WTC11 (cell line): ENCODE measurements at regions of chr5 and their contacts with region 1.

Region 1: GRCh38 chr5:178838695-178839685 is 20.8 kb upstream of the ZNF354B start:
- DNase-seq: peak; percentile 90
- ATAC-seq: peak; percentile 95
- H3K4me3 Mint-ChIP-seq: peak overlapping the region; percentile 66
- H3K27ac Mint-ChIP-seq: no peak overlapping the region
- H3K4me1 Mint-ChIP-seq: peaks cover 6% of the 10 kb centered on the region
- H3K27me3 Mint-ChIP-seq: no peaks in the 10 kb centered on the region; the same call in 1 of the 2 replicates
- CTCF ChIP-seq: peak; percentile 85

Region 2: DNA sequence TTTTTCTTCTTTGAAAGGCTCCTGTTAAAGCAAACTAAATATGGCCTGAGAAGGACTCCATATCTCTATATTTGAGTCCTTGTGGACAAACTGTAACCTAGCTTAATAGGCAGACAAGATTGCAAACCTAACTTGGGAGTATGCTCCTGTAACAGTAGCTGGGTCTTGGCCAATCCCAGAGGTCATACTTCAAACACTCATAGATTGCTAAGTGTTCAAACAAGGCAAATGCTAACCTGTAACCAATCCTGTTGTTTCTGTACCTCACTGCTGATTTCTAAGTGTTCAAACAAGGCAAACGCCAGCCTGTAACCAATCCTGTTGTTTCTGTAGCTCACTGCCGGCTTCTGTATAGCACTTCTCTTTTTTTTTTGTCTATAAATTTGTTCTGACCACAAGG is 161.6 kb before region 1 on chr5:
- CTCF ChIA-PET with region 1: no interaction called
- POLR2A ChIA-PET with region 1: no interaction called
- DNase-seq: no peak
- ATAC-seq: no peak
- H3K4me3 Mint-ChIP-seq: no peak overlapping the region
- H3K27ac Mint-ChIP-seq: no peak overlapping the region
- H3K4me1 Mint-ChIP-seq: no peaks in the 10 kb centered on the region
- H3K27me3 Mint-ChIP-seq: peaks cover 3% of the 10 kb centered on the region; the same call in 1 of the 2 replicates
- CTCF ChIP-seq: no peak

Region 3: DNA sequence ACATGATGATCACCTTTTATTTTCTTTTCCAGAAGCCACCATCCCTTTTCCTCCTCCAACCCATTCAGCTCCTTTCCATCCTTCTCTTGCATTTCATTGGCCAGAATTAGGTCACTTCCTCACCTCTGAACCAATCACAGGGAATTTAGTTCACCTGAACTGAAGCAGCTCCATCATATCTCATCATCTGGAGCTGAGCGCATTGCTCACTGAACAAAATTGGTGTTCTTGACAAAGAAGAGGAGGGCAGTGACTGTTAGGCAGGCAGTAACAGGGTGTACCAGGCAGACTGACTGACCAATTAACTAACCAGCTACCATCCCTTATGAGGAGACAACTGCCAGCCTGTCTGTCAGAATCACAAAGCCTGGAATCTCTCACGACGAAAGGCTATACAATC is 106.7 kb before region 1 on chr5:
- CTCF ChIA-PET with region 1: interaction called, 15 read pairs
- POLR2A ChIA-PET with region 1: no interaction called
- DNase-seq: no peak
- ATAC-seq: no peak
- H3K4me3 Mint-ChIP-seq: no peak overlapping the region
- H3K27ac Mint-ChIP-seq: no peak overlapping the region
- H3K4me1 Mint-ChIP-seq: peaks cover 13% of the 10 kb centered on the region; the same call in 1 of the 2 replicates
- H3K27me3 Mint-ChIP-seq: peaks cover 13% of the 10 kb centered on the region
- CTCF ChIP-seq: no peak

Region 4: DNA sequence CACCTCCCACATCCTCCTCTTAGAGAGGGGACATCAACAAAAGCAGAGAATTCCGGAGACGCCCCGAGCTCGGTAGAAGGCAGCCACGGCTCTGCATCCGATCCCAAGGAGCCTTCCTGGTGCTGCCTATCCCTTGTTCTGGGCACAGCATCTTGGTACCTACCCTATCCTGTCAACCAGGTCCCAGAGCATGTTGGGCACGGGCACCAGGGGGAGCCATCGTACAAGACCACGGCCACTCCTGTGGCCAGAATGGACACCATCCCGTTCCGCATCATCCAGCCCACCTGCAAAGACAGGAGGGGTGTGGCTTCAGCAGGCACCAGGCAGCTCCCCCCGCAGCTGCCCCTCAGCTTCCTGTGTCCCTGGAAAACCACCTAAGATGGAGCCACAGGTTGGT is 45.8 kb before region 1 on chr5:
- CTCF ChIA-PET with region 1: interaction called, 13 read pairs
- POLR2A ChIA-PET with region 1: interaction called, 3 read pairs
- DNase-seq: peak; percentile 89
- ATAC-seq: peak; percentile 93
- H3K4me3 Mint-ChIP-seq: no peak overlapping the region
- H3K27ac Mint-ChIP-seq: no peak overlapping the region
- H3K4me1 Mint-ChIP-seq: peaks cover 9% of the 10 kb centered on the region
- H3K27me3 Mint-ChIP-seq: no peaks in the 10 kb centered on the region
- CTCF ChIP-seq: peak; percentile 57

Region 5: GRCh38 chr5:178826216-178826615 is 12.8 kb before region 1 on chr5:
- CTCF ChIA-PET with region 1: interaction called, 11 read pairs
- POLR2A ChIA-PET with region 1: no interaction called
- DNase-seq: peak; percentile 32
- ATAC-seq: peak; percentile 93
- H3K4me3 Mint-ChIP-seq: peak overlapping the region; percentile 36; the same call in 1 of the 2 replicates
- H3K27ac Mint-ChIP-seq: peak overlapping the region; percentile 97
- H3K4me1 Mint-ChIP-seq: peaks cover 70% of the 10 kb centered on the region
- H3K27me3 Mint-ChIP-seq: no peaks in the 10 kb centered on the region
- CTCF ChIP-seq: no peak

Region 6: DNA sequence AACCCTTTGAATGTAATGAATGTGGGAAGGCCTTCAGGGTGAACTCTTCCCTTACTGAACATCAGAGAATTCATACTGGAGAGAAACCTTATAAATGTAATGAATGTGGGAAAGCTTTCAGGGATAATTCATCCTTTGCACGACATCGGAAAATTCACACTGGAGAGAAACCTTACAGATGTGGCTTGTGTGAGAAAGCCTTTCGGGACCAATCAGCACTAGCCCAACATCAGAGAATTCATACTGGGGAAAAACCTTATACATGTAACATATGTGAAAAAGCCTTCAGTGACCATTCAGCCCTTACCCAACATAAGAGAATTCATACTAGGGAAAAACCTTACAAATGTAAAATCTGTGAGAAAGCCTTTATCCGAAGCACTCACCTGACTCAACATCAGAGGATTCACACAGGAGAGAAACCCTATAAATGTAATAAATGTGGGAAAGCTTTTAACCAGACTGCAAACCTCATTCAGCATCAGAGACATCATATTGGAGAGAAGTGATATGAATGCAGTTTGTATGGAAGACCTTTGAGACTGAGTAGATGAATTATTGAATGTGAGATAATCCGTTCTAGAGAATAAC is 126.6 kb after region 1 on chr5:
- CTCF ChIA-PET with region 1: no interaction called
- POLR2A ChIA-PET with region 1: no interaction called
- DNase-seq: no peak
- ATAC-seq: no peak
- H3K4me3 Mint-ChIP-seq: no peak overlapping the region
- H3K27ac Mint-ChIP-seq: no peak overlapping the region
- H3K4me1 Mint-ChIP-seq: no peaks in the 10 kb centered on the region
- H3K27me3 Mint-ChIP-seq: peaks cover 49% of the 10 kb centered on the region
- CTCF ChIP-seq: no peak